ENCODE measurements at regions of chr2 and their contacts with region 1.

Region 1: GRCh38 chr2:30165050-30165520 is 18.3 kb downstream of the YPEL5 start:
- DNase-seq: peak; percentile 83
- H3K4me3 ChIP-seq: no peak overlapping the region
- H3K27ac ChIP-seq: no peak overlapping the region
- H3K27me3 ChIP-seq: no peaks in the 10 kb centered on the region
- CTCF ChIP-seq: peak; percentile 93

Region 2: GRCh38 chr2:30178618-30179434 is 13.7 kb after region 1 on chr2:
- CTCF ChIA-PET with region 1: interaction called, 56 read pairs
- POLR2A ChIA-PET with region 1: no interaction called
- DNase-seq: no peak
- H3K4me3 ChIP-seq: no peak overlapping the region
- H3K27ac ChIP-seq: no peak overlapping the region
- H3K27me3 ChIP-seq: peaks cover 4% of the 10 kb centered on the region
- CTCF ChIP-seq: no peak

Region 3: DNA sequence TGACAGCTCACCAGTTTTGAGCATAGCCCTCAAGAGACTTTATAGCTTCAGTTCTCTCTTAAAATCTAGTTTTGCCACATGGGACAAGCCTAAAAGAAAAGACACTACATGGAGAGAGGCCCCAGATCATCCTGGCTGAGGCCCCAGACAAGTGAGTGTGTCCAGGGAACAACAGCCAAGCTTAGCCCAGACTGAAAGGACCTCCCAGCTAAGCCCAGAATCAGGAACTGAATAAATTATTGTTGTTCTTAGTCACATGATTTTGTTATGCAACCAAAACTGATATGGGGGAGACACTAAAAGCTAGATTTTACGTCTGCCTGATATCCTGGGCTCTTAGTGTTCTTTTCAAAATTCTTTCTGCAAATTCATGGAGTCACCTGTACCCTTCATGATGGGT is 36.9 kb after region 1 on chr2:
- CTCF ChIA-PET with region 1: interaction called, 83 read pairs
- POLR2A ChIA-PET with region 1: no interaction called
- DNase-seq: no peak
- H3K4me3 ChIP-seq: no peak overlapping the region
- H3K27ac ChIP-seq: no peak overlapping the region
- H3K27me3 ChIP-seq: peaks cover 13% of the 10 kb centered on the region
- CTCF ChIP-seq: no peak

Region 4: GRCh38 chr2:30231212-30231995 is 66.3 kb after region 1 on chr2 and contains the start of gene LBH:
- CTCF ChIA-PET with region 1: interaction called, 37 read pairs
- POLR2A ChIA-PET with region 1: interaction called, 38 read pairs
- DNase-seq: peak; percentile 85
- H3K4me3 ChIP-seq: peak within 1 kb of the TSS; percentile 89
- H3K27ac ChIP-seq: peak within 1 kb of the TSS; percentile 65
- H3K27me3 ChIP-seq: no peaks in the 10 kb centered on the region
- CTCF ChIP-seq: no peak
- polyA plus RNA-seq, gene LBH: 381 and 463 TPM in 2 replicates

Region 5: DNA sequence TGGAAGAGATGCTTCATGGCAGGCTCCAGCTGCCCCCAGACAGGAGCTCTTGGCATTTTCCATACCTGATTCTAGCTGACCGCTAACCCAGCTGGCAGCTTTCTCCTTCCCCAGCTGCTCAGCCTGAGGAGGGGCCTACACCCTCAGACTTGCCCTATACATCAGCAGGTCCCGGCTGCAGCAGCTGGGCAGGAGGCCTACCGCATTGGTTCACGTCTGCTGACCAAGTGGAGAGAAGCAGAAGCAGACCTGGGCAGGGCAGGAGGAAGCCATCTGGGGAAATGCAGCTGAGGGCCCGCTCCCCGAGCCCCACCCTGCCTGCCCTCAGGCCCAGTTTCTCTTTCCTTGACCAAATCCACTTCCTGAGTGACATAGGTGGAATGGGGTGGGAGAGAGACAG is 117.0 kb after region 1 on chr2:
- CTCF ChIA-PET with region 1: interaction called, 13 read pairs
- POLR2A ChIA-PET with region 1: no interaction called
- DNase-seq: no peak
- H3K4me3 ChIP-seq: no peak overlapping the region
- H3K27ac ChIP-seq: no peak overlapping the region
- H3K27me3 ChIP-seq: no peaks in the 10 kb centered on the region
- CTCF ChIP-seq: no peak

Region 6: GRCh38 chr2:30691948-30692828 is 527.1 kb after region 1 on chr2:
- CTCF ChIA-PET with region 1: interaction called, 10 read pairs
- POLR2A ChIA-PET with region 1: no interaction called
- DNase-seq: no peak
- H3K4me3 ChIP-seq: no peak overlapping the region
- H3K27ac ChIP-seq: no peak overlapping the region
- H3K27me3 ChIP-seq: no peaks in the 10 kb centered on the region
- CTCF ChIP-seq: peak; percentile 7; the same call in 1 of the 2 replicates